ENCODE measurements at regions of chr13 and their contacts with region 1.

Region 1: GRCh38 chr13:102657630-102658029 is 37.2 kb downstream of the METTL21C start:
- DNase-seq: no peak
- ATAC-seq: no peak
- H3K4me3 ChIP-seq: no peak overlapping the region
- H3K27ac ChIP-seq: no peak overlapping the region
- H3K4me1 ChIP-seq: peaks cover 0 to 2% (median 0%) of the 10 kb centered on the region in 12 donors
- H3K27me3 ChIP-seq: no peaks in the 10 kb centered on the region
- CTCF ChIP-seq: peak in 5 of 12 donors; percentile 10 to 36 (median 24)
- POLR2A ChIP-seq: no peak

Region 2: DNA sequence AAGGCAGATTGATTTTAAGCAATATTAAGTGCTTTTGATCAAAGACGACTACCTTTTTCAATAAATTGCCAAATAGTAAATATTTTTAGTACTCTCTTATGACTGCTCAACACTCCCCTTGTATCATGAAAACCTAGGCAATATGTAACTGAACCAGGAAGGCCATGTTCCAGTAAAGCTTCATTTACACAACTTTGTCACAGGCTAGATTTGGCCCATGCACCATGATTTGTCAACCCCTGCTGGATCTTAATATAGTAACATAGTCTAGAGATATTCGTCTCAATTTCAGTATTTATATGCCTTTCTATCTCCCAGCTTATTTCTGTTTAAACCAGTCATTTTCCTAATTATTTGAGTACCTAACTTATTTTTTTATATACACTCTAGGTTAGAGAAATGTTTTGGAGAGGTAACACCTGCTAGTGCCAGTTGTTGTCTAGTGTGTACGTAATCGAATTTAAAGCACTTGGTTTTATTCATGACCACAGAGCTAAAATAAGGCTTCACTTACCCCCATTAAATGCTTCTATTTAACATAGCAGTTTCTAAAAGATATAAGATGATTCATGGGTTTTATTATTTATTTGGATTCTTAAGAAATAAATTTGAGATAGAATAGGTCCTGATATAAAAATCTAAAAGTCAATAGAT is 39.8 kb before region 1 on chr13:
- intact Hi-C with region 1: loop called in 1 of 10 experiments (anchors 5 kb)
- DNase-seq: no peak
- ATAC-seq: peak in 3 of 4 donors; percentile 36 to 56 (median 52)
- H3K4me3 ChIP-seq: no peak overlapping the region
- H3K27ac ChIP-seq: no peak overlapping the region
- H3K4me1 ChIP-seq: peaks cover 0 to 6% (median 0%) of the 10 kb centered on the region in 12 donors
- H3K27me3 ChIP-seq: no peaks in the 10 kb centered on the region
- CTCF ChIP-seq: no peak
- POLR2A ChIP-seq: no peak

Region 3: DNA sequence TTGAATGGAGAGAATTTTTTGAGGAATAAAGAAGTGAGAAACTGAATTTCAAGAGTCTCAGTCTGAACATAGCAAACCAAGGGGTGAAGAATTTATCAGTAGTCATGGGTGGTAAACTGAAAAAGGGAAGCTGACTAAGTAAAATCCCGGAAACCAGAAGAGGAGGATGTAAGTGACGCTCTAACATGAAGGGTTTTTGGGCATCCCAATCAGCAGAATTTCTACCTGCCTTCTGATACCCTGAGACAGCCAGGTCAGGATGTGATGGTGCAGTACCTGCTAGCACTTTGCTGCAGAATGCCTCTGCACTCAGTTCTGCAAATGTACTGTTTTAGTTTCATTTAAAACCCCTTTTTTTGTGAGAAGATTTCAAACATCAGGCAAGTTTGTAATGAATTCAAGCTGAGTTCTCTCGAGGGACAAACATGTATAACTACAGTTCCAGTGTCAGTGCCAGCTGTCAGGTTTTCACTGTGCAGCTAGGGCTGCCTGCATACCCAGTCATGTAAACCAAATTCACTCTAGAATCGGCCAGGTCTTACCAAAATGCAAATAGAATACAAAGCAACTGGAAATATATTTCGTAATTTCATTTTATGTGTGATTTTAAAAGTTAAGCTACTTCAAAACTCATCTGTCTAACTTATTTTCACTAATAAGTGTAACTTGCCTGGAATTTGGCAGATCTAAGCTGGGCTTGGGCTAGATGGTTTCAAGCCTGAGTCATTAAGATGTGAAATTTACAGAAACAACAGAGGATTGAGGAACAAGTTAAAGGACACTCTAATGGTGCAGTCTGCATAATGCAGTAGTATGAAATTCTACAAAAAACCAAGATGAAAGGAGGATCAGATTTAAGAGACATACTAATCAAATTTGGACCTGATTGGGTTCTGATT is 23.5 kb after region 1 on chr13:
- intact Hi-C with region 1: no loop called
- DNase-seq: no peak
- ATAC-seq: peak in 2 of 4 donors; percentile 16 to 42
- H3K4me3 ChIP-seq: no peak overlapping the region
- H3K27ac ChIP-seq: peak overlapping the region in 1 of 12 donors; percentile 74
- H3K4me1 ChIP-seq: peaks cover 0 to 16% (median 0%) of the 10 kb centered on the region in 12 donors
- H3K27me3 ChIP-seq: no peaks in the 10 kb centered on the region
- CTCF ChIP-seq: no peak
- POLR2A ChIP-seq: no peak

Region 4: GRCh38 chr13:102947745-102948405 is 290.2 kb after region 1 on chr13:
- intact Hi-C with region 1: no loop called
- DNase-seq: peak in 1 of 5 donors; percentile 24
- ATAC-seq: peak in 1 of 4 donors; percentile 67
- H3K4me3 ChIP-seq: no peak overlapping the region
- H3K27ac ChIP-seq: no peak overlapping the region
- H3K4me1 ChIP-seq: no peaks in the 10 kb centered on the region
- H3K27me3 ChIP-seq: no peaks in the 10 kb centered on the region
- CTCF ChIP-seq: peak in 6 of 12 donors; percentile 15 to 39 (median 33)
- POLR2A ChIP-seq: no peak